ENCODE measurements at regions of chr4 and their contacts with region 1.

Region 1: GRCh38 chr4:40289366-40290188 is 45.6 kb upstream of the CHRNA9 start:
- DNase-seq: peak in 17 of 35 experiments; percentile 15 to 59 (median 29)
- ATAC-seq: peak; percentile 84 to 94 (median 90)
- H3K4me3 ChIP-seq: peak overlapping the region in 1 of 2 donors; percentile 12
- H3K4me3 Mint-ChIP-seq: peak overlapping the region; percentile 42 to 62 (median 57)
- H3K27ac ChIP-seq: peak overlapping the region; percentile 63
- H3K27ac Mint-ChIP-seq: peak overlapping the region; percentile 94 to 97
- H3K4me1 ChIP-seq: peaks cover 26 to 40% of the 10 kb centered on the region in 2 experiments
- H3K4me1 Mint-ChIP-seq: peaks cover 16 to 74% (median 63%) of the 10 kb centered on the region in 3 donors
- H3K27me3 ChIP-seq: no peaks in the 10 kb centered on the region
- H3K27me3 Mint-ChIP-seq: no peaks in the 10 kb centered on the region

Region 2: GRCh38 chr4:40264995-40265909 is 24.3 kb before region 1 on chr4:
- CTCF ChIA-PET with region 1: no interaction called
- POLR2A ChIA-PET with region 1: no interaction called
- DNase-seq: peak in 28 of 35 experiments; percentile 26 to 78 (median 54)
- ATAC-seq: peak; percentile 73 to 86 (median 82)
- H3K4me3 ChIP-seq: peak overlapping the region; percentile 22 to 42
- H3K4me3 Mint-ChIP-seq: peak overlapping the region; percentile 42 to 77 (median 61)
- H3K27ac ChIP-seq: peak overlapping the region; percentile 83
- H3K27ac Mint-ChIP-seq: peak overlapping the region; percentile 94 to 98
- H3K4me1 ChIP-seq: peaks cover 30 to 60% of the 10 kb centered on the region in 2 experiments
- H3K4me1 Mint-ChIP-seq: peaks cover 53 to 80% (median 61%) of the 10 kb centered on the region in 3 donors
- H3K27me3 ChIP-seq: no peaks in the 10 kb centered on the region
- H3K27me3 Mint-ChIP-seq: no peaks in the 10 kb centered on the region

Region 3: GRCh38 chr4:40340030-40340429 is 50.5 kb after region 1 on chr4:
- CTCF ChIA-PET with region 1: no interaction called
- POLR2A ChIA-PET with region 1: interaction called in 1 of 2 experiments, 14 read pairs
- DNase-seq: no peak
- ATAC-seq: no peak
- H3K4me3 ChIP-seq: no peak overlapping the region
- H3K4me3 Mint-ChIP-seq: no peak overlapping the region
- H3K27ac ChIP-seq: no peak overlapping the region
- H3K27ac Mint-ChIP-seq: no peak overlapping the region
- H3K4me1 ChIP-seq: no peaks in the 10 kb centered on the region
- H3K4me1 Mint-ChIP-seq: peaks cover 0 to 2% (median 0%) of the 10 kb centered on the region in 3 donors
- H3K27me3 ChIP-seq: peaks cover 0 to 2% of the 10 kb centered on the region in 2 experiments
- H3K27me3 Mint-ChIP-seq: no peaks in the 10 kb centered on the region